K562 (cell line): ENCODE measurements at regions of chr2 and their contacts with region 1.

Region 1: GRCh38 chr2:10832203-10832936 is 19.8 kb upstream of the PDIA6 start:
- DNase-seq: peak; percentile 85 to 87 (median 86)
- ATAC-seq: peak; percentile 92
- H3K4me3 ChIP-seq: no peak overlapping the region
- H3K27ac ChIP-seq: no peak overlapping the region
- H3K4me1 ChIP-seq: peaks cover 0 to 13% of the 10 kb centered on the region in 2 experiments; a peak in 3 of 5 replicates
- H3K27me3 ChIP-seq: peaks cover 38 to 54% of the 10 kb centered on the region in 2 experiments
- CTCF ChIP-seq: peak; percentile 95 to 97 (median 97)
- EP300 ChIP-seq: no peak
- POLR2A ChIP-seq: no peak
- RAD21 ChIP-seq: peak; percentile 84 to 93

Region 2: GRCh38 chr2:10750610-10751009 is 81.8 kb before region 1 on chr2:
- CTCF ChIA-PET with region 1: no interaction called
- POLR2A ChIA-PET with region 1: no interaction called
- in situ Hi-C with region 1: no loop called
- intact Hi-C with region 1: no loop called
- DNase-seq: no peak
- ATAC-seq: peak; percentile 51
- H3K4me3 ChIP-seq: no peak overlapping the region
- H3K27ac ChIP-seq: no peak overlapping the region
- H3K4me1 ChIP-seq: no peaks in the 10 kb centered on the region; a peak in 1 of 5 replicates
- H3K27me3 ChIP-seq: peaks cover 26 to 46% of the 10 kb centered on the region in 2 experiments; a peak in 4 of 5 replicates
- CTCF ChIP-seq: no peak
- EP300 ChIP-seq: no peak
- POLR2A ChIP-seq: no peak
- RAD21 ChIP-seq: no peak

Region 3: GRCh38 chr2:10787176-10787968 is 45.0 kb before region 1 on chr2:
- CTCF ChIA-PET with region 1: no interaction called
- POLR2A ChIA-PET with region 1: no interaction called
- in situ Hi-C with region 1: no loop called
- intact Hi-C with region 1: loop called (anchors 1 kb)
- DNase-seq: peak in 2 of 4 experiments; percentile 39 to 46
- ATAC-seq: peak; percentile 76
- H3K4me3 ChIP-seq: no peak overlapping the region
- H3K27ac ChIP-seq: no peak overlapping the region
- H3K4me1 ChIP-seq: no peaks in the 10 kb centered on the region
- H3K27me3 ChIP-seq: no peaks in the 10 kb centered on the region
- CTCF ChIP-seq: peak; percentile 36 to 57 (median 49); a peak in 4 of 6 replicates
- EP300 ChIP-seq: no peak
- POLR2A ChIP-seq: no peak
- RAD21 ChIP-seq: peak in 1 of 2 experiments; percentile 29; a peak in 1 of 4 replicates

Region 4: GRCh38 chr2:10982931-10983701 is 150.7 kb after region 1 on chr2:
- CTCF ChIA-PET with region 1: no interaction called
- POLR2A ChIA-PET with region 1: no interaction called
- in situ Hi-C with region 1: no loop called
- intact Hi-C with region 1: no loop called
- DNase-seq: no peak
- ATAC-seq: no peak
- H3K4me3 ChIP-seq: no peak overlapping the region
- H3K27ac ChIP-seq: no peak overlapping the region
- H3K4me1 ChIP-seq: no peaks in the 10 kb centered on the region
- H3K27me3 ChIP-seq: peaks cover 30 to 68% of the 10 kb centered on the region in 2 experiments; a peak in 4 of 5 replicates
- CTCF ChIP-seq: no peak
- EP300 ChIP-seq: no peak
- POLR2A ChIP-seq: no peak
- RAD21 ChIP-seq: no peak

Region 5: DNA sequence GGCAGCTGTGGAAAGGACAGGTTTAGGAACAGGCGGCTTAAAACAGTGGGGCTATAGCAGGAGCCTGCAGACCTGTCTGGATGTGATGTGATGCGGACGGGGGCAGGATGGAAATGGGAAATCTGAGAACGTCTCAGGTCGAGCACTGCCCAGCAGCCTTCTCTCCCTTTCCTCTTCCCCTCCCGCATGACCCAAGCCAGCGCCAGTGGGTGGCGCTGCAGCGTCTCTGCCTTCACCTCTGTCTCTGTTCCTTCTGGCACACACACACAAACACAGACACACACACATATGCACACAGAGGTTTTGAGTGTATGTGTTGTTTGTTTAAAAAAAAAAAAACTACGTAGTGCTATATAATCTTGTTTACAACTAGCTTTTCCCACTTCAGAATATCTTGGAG is 240.9 kb after region 1 on chr2:
- CTCF ChIA-PET with region 1: no interaction called
- POLR2A ChIA-PET with region 1: no interaction called
- in situ Hi-C with region 1: no loop called
- intact Hi-C with region 1: loop called (anchors 5 kb)
- DNase-seq: peak; percentile 27 to 73 (median 34)
- ATAC-seq: peak; percentile 93
- H3K4me3 ChIP-seq: no peak overlapping the region
- H3K27ac ChIP-seq: no peak overlapping the region
- H3K4me1 ChIP-seq: no peaks in the 10 kb centered on the region; a peak in 1 of 5 replicates
- H3K27me3 ChIP-seq: peaks cover 13 to 57% of the 10 kb centered on the region in 2 experiments; a peak in 4 of 5 replicates
- CTCF ChIP-seq: peak; percentile 67 to 78 (median 70)
- EP300 ChIP-seq: no peak
- POLR2A ChIP-seq: no peak
- RAD21 ChIP-seq: peak; percentile 21 to 51; a peak in 3 of 4 replicates

Region 6: DNA sequence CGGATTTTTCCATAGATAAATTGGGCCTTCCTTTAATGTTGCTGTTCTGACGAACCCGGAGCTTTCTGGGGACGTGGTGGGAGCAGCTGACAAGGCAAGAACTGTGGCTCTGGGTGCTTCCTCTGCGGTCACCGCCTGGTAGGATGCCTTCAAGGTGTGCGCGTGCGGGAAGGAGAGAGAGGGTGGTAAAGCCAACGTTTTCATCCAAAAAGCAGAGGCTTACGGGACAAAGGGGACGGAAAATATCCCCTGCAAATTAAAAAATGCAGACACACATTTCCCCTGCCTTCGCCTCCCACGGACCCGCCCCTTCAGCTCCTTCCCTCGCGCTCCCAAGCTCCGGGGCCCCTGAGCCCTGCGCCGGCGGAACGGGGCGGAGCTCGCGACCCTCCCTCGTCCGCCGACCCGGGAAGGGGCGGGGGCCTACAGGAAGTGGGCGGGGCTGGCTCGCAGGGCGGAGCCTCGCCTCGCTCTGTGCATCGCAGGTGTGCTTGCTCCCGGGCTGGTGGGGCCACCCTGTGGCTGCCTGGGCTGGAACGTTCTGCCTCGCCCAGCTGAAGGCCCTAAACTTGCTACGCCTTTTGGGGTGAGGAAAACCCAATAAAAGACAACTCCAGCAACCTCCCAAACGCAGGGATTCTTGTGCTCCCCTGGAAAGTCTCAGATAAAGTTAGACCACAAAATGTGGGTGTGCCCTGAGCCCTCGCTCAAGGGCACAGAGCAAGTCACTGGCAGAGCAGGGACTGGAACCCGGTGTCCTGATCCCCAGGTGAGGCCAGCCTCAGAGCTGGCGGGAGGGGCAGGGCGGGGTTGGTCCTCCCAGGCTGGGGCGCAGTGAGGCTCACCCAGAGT is 297.5 kb after region 1 on chr2:
- CTCF ChIA-PET with region 1: interaction called, 32 read pairs
- POLR2A ChIA-PET with region 1: interaction called, 4 read pairs
- in situ Hi-C with region 1: no loop called
- intact Hi-C with region 1: loop called (anchors 1 kb)
- DNase-seq: peak; percentile 85 to 94 (median 90)
- ATAC-seq: peak; percentile 94
- H3K4me3 ChIP-seq: peak overlapping the region; percentile 48
- H3K27ac ChIP-seq: no peak overlapping the region
- H3K4me1 ChIP-seq: peaks cover 16 to 24% of the 10 kb centered on the region in 2 experiments; a peak in 4 of 5 replicates
- H3K27me3 ChIP-seq: peaks cover 3 to 29% of the 10 kb centered on the region in 2 experiments; a peak in 3 of 5 replicates
- CTCF ChIP-seq: peak; percentile 56 to 74 (median 71)
- EP300 ChIP-seq: no peak
- POLR2A ChIP-seq: no peak
- RAD21 ChIP-seq: peak; percentile 66 to 78

Region 7: GRCh38 chr2:11583840-11584524 is 751.6 kb after region 1 on chr2:
- CTCF ChIA-PET with region 1: interaction called, 6 read pairs
- POLR2A ChIA-PET with region 1: no interaction called
- in situ Hi-C with region 1: loop called (anchors 5 kb)
- intact Hi-C with region 1: no loop called
- DNase-seq: peak; percentile 84 to 89 (median 89)
- ATAC-seq: peak; percentile 92
- H3K4me3 ChIP-seq: no peak overlapping the region
- H3K27ac ChIP-seq: no peak overlapping the region
- H3K4me1 ChIP-seq: peaks cover 3 to 6% of the 10 kb centered on the region in 2 experiments; a peak in 3 of 5 replicates
- H3K27me3 ChIP-seq: peaks cover 26 to 86% of the 10 kb centered on the region in 2 experiments
- CTCF ChIP-seq: peak; percentile 93 to 98 (median 97)
- EP300 ChIP-seq: no peak
- POLR2A ChIP-seq: no peak
- RAD21 ChIP-seq: peak; percentile 93 to 94